ENCODE measurements at regions of chr6 and their contacts with region 1.

Region 1: DNA sequence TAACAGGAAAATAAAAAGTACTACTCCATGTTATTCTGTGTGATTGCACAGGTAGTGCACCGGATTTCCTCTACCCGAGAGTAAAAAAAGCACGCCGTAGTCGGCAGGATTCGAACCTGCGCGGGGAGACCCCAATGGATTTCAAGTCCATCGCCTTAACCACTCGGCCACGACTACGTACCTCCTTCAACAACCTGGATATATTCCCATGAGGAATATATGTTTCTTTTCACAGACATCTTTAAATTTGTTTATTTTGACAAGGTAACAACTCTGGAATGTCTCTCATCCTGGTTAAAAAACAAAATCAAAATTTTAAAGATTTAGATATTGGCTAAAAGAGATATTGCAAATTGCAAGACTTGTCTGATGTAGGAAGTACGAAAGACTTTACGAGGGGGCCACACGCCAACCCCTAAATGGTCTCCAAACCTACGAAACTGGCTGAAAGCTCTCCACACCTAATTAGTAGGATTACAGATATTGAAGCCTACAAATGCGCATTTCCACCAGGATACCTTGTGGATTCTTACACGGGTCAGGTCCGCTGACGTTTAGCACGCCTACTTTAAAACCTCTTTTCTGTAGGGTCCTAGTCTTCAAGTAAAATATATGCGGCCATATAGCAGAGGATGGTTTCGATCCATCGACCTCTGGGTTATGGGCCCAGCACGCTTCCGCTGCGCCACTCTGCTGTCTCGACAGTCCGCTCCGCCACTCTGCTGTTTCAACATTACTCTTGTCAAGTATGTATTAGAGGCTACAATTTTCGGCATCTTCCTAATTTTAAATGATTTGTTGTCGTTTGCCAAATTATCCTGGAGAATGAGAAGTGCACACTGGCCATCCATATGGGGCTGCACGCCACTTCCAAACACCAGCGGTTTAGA is 52.3 kb upstream of the BTN3A2 start:
- DNase-seq: peak; percentile 79 to 93
- ATAC-seq: peak; percentile 52 to 75 (median 68)
- H3K4me3 ChIP-seq: peak overlapping the region; percentile 59
- H3K4me3 Mint-ChIP-seq: peak overlapping the region; percentile 98
- H3K27ac ChIP-seq: peak overlapping the region; percentile 36
- H3K27ac Mint-ChIP-seq: peak overlapping the region; percentile 98 to 99
- H3K4me1 ChIP-seq: peaks cover 20% of the 10 kb centered on the region
- H3K4me1 Mint-ChIP-seq: peaks cover 58% of the 10 kb centered on the region in 2 donors
- H3K27me3 ChIP-seq: no peaks in the 10 kb centered on the region
- H3K27me3 Mint-ChIP-seq: peaks cover 6 to 13% of the 10 kb centered on the region in 2 donors
- CTCF ChIP-seq: no peak

Region 2: DNA sequence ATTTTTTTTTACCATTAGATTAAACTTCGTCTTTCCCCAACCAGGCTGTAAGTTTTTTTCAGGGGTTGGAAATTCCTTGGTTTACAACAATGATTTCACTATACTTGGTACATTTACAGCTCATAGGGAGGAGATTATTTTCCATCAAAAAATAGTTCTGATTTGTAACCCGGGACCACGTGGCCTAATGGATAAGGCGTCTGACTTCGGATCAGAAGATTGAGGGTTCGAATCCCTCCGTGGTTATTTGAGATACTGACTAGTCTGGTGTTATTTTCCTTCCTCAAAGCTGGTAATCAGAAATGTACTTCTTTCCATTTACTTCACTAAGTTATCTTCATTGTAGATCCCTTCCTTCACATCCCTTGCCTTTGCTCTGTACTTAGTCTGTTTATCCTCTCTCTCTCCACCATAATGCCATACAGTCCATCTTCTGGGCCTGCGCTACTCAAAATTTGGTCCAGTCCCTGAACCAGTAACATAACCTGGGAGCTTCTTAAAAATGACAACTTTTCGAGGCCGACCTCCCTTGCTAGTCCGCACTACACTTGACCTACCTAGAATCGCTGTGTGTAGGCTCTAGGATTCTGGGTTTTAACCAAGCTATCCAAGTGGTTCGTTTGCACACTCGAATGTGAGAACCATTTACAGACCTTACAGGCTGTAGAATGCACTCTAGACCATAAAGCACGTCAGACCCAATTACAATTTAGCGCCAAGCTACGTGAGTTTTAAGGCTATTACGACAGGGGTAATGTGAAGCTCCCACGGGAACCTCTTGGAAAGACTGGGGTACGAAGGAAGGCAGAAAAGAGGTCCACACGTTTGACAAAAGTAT is 10.1 kb after region 1 on chr6:
- intact Hi-C with region 1: loop called (anchors 1 kb)
- DNase-seq: peak in 1 of 2 donors; percentile 85
- ATAC-seq: peak; percentile 72 to 76 (median 75)
- H3K4me3 ChIP-seq: peak overlapping the region; percentile 47
- H3K4me3 Mint-ChIP-seq: peak overlapping the region; percentile 68
- H3K27ac ChIP-seq: no peak overlapping the region
- H3K27ac Mint-ChIP-seq: peak overlapping the region; percentile 86 to 92
- H3K4me1 ChIP-seq: peaks cover 16% of the 10 kb centered on the region
- H3K4me1 Mint-ChIP-seq: peaks cover 25 to 27% of the 10 kb centered on the region in 2 donors
- H3K27me3 ChIP-seq: peaks cover 15% of the 10 kb centered on the region
- H3K27me3 Mint-ChIP-seq: peaks cover 32 to 38% of the 10 kb centered on the region in 2 donors
- CTCF ChIP-seq: no peak

Measured in natural killer cell (primary cell).